PC-9 (cell line): ENCODE measurements at regions of chrX and their contacts with region 1.

Region 1: DNA sequence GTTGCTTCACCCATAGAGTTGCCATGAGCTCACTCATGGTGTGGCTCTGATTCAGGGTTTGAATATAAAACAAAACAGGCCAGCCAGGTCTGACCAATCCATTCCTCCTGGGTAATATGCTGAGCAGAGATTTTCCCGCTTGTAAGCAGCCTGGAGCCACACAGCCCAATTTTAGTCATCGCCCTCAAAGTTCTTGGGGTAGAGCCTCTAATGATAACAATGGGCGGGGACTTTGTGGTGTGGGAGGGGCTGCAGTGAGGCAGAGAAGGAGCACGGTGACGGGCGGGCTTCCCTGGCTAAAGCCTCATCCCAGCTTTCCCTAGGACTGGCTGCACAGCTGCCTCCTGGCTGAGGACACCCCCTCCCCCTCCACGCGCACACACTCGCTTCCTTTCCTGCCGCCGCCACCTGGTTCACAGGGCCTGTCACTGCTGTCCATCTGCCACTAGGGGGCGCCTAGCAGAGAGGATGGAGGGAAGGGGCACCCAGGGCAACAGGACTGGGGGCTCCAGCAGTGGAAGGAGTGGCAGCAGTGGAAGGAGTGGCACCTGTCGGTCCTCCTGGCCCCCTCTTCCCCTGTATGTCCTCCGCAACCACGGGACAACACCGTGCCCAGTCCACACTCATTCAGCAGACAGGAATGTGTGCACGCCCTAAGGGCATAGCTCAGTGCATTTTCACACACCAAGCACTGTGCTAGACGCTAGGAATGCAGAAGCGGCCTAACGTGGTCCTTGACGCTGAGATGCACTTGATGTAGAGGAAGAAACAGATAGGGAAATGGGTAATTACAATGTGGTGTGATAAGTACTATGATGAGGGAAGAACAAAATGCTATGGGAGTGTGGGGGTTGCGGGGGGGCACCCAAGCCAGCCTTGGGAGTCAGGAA is 26.8 kb downstream of the PRPS1 start:
- DNase-seq: peak; percentile 89 to 96
- H3K4me3 ChIP-seq: peak overlapping the region; percentile 39; the same call in 1 of the 2 replicates
- H3K27ac ChIP-seq: peak overlapping the region; percentile 86
- H3K4me1 ChIP-seq: peaks cover 29% of the 10 kb centered on the region
- H3K27me3 ChIP-seq: no peaks in the 10 kb centered on the region
- CTCF ChIP-seq: peak; percentile 93

Region 2: GRCh38 chrX:107025545-107025944 is 629.6 kb before region 1 on chrX:
- CTCF ChIA-PET with region 1: no interaction called
- POLR2A ChIA-PET with region 1: no interaction called
- intact Hi-C with region 1: loop called (anchors 10 kb)
- DNase-seq: no peak
- H3K4me3 ChIP-seq: no peak overlapping the region
- H3K27ac ChIP-seq: no peak overlapping the region
- H3K4me1 ChIP-seq: no peaks in the 10 kb centered on the region
- H3K27me3 ChIP-seq: no peaks in the 10 kb centered on the region
- CTCF ChIP-seq: peak; percentile 73

Region 3: GRCh38 chrX:107537815-107538214 is 117.3 kb before region 1 on chrX:
- CTCF ChIA-PET with region 1: no interaction called
- POLR2A ChIA-PET with region 1: no interaction called
- intact Hi-C with region 1: loop called (anchors 2 kb)
- DNase-seq: peak; percentile 40 to 52
- H3K4me3 ChIP-seq: no peak overlapping the region
- H3K27ac ChIP-seq: no peak overlapping the region
- H3K4me1 ChIP-seq: peaks cover 3% of the 10 kb centered on the region; the same call in 1 of the 2 replicates
- H3K27me3 ChIP-seq: no peaks in the 10 kb centered on the region
- CTCF ChIP-seq: peak; percentile 88

Region 4: GRCh38 chrX:107672955-107673378 is 17.9 kb after region 1 on chrX:
- CTCF ChIA-PET with region 1: interaction called, 10 read pairs
- POLR2A ChIA-PET with region 1: interaction called, 19 read pairs
- intact Hi-C with region 1: loop called (anchors 2 kb)
- DNase-seq: peak; percentile 56 to 70
- H3K4me3 ChIP-seq: no peak overlapping the region; the same call in 1 of the 2 replicates
- H3K27ac ChIP-seq: no peak overlapping the region
- H3K4me1 ChIP-seq: peaks cover 49% of the 10 kb centered on the region
- H3K27me3 ChIP-seq: no peaks in the 10 kb centered on the region
- CTCF ChIP-seq: peak; percentile 82

Region 5: GRCh38 chrX:107731831-107732502 is 76.8 kb after region 1 on chrX:
- CTCF ChIA-PET with region 1: interaction called, 12 read pairs
- POLR2A ChIA-PET with region 1: no interaction called
- intact Hi-C with region 1: no loop called
- DNase-seq: peak; percentile 93 to 95
- H3K4me3 ChIP-seq: no peak overlapping the region
- H3K27ac ChIP-seq: peak overlapping the region; percentile 63
- H3K4me1 ChIP-seq: peaks cover 81% of the 10 kb centered on the region
- H3K27me3 ChIP-seq: no peaks in the 10 kb centered on the region
- CTCF ChIP-seq: no peak

Region 6: GRCh38 chrX:107742700-107743191 is 87.6 kb after region 1 on chrX:
- CTCF ChIA-PET with region 1: no interaction called
- POLR2A ChIA-PET with region 1: no interaction called
- intact Hi-C with region 1: no loop called
- DNase-seq: no peak
- H3K4me3 ChIP-seq: peak overlapping the region; percentile 30; the same call in 1 of the 2 replicates
- H3K27ac ChIP-seq: peak overlapping the region; percentile 58
- H3K4me1 ChIP-seq: peaks cover 37% of the 10 kb centered on the region
- H3K27me3 ChIP-seq: no peaks in the 10 kb centered on the region
- CTCF ChIP-seq: no peak

Region 7: GRCh38 chrX:107894038-107894437 is 238.9 kb after region 1 on chrX:
- CTCF ChIA-PET with region 1: no interaction called
- POLR2A ChIA-PET with region 1: no interaction called
- intact Hi-C with region 1: loop called (anchors 5 kb)
- DNase-seq: peak; percentile 32 to 74
- H3K4me3 ChIP-seq: no peak overlapping the region
- H3K27ac ChIP-seq: no peak overlapping the region
- H3K4me1 ChIP-seq: no peaks in the 10 kb centered on the region
- H3K27me3 ChIP-seq: no peaks in the 10 kb centered on the region
- CTCF ChIP-seq: peak; percentile 92